Heart left ventricle (tissue), 16 donors: ENCODE measurements at regions of chr3 and their contacts with region 1.

Region 1: DNA sequence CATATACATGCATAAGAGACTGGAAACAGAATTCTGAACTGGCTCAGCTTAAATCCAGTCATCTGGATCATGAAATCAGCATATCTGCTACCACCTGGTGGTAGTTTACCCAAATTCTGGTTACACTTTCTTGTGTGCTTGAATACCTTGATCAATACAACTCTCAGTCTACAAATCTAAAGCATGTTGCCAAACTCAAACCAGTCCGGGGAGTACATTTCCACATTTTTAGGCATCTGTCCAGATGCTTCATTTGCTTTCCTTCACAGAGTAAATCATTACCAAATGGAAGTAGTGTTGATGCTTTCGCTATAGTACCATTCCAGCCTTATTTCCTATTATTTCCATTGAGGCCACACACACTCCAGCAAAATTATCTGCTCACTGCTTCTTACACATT is 126.4 kb downstream of the P2RY1 start:
- DNase-seq: no peak
- ATAC-seq: no peak
- H3K4me3 ChIP-seq: no peak overlapping the region
- H3K27ac ChIP-seq: no peak overlapping the region
- H3K4me1 ChIP-seq: peaks cover 0 to 9% (median 0%) of the 10 kb centered on the region in 12 donors
- H3K27me3 ChIP-seq: no peaks in the 10 kb centered on the region
- CTCF ChIP-seq: peak in 10 of 12 donors; percentile 23 to 48 (median 34)
- POLR2A ChIP-seq: no peak

Region 2: GRCh38 chr3:152436707-152437590 is 524.4 kb before region 1 on chr3:
- intact Hi-C with region 1: no loop called
- DNase-seq: no peak
- ATAC-seq: peak in 3 of 4 donors; percentile 48 to 76 (median 55)
- H3K4me3 ChIP-seq: no peak overlapping the region
- H3K27ac ChIP-seq: peak overlapping the region in 11 of 12 donors; percentile 2 to 64 (median 48)
- H3K4me1 ChIP-seq: peaks cover 4 to 57% (median 36%) of the 10 kb centered on the region in 12 donors
- H3K27me3 ChIP-seq: no peaks in the 10 kb centered on the region
- CTCF ChIP-seq: no peak
- POLR2A ChIP-seq: no peak

Region 3: GRCh38 chr3:152695840-152696239 is 265.5 kb before region 1 on chr3:
- intact Hi-C with region 1: loop called in 1 of 10 experiments (anchors 10 kb)
- DNase-seq: no peak
- ATAC-seq: no peak
- H3K4me3 ChIP-seq: no peak overlapping the region
- H3K27ac ChIP-seq: no peak overlapping the region
- H3K4me1 ChIP-seq: no peaks in the 10 kb centered on the region
- H3K27me3 ChIP-seq: no peaks in the 10 kb centered on the region
- CTCF ChIP-seq: peak in 4 of 12 donors; percentile 11 to 19 (median 15)
- POLR2A ChIP-seq: no peak

Region 4: DNA sequence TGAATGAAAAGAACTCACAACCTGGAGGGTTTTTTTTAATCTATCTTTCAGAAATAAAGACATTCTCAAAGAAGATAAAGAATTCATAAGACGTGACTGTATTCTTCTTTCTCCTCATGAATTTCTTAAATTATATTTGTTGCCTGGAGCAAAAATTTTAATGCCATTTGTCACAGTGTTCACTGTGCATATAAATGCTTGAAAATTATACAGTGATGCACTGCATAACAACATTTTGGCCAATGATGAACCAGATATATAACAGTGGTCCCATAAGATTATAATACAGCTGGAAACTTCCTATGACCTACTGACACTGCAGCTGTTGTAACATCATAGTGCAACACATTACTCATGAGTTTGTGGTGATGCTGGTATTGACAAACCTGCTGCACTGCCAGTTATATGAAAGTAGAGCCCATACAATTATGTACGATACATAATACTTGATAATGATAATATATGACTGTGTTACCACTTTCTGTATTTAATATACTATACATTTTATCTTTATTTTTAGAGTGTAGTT is 59.1 kb before region 1 on chr3:
- intact Hi-C with region 1: no loop called
- DNase-seq: no peak
- ATAC-seq: no peak
- H3K4me3 ChIP-seq: no peak overlapping the region
- H3K27ac ChIP-seq: no peak overlapping the region
- H3K4me1 ChIP-seq: no peaks in the 10 kb centered on the region
- H3K27me3 ChIP-seq: no peaks in the 10 kb centered on the region
- CTCF ChIP-seq: no peak
- POLR2A ChIP-seq: no peak